WTC11 (cell line): ENCODE measurements at regions of chr4 and their contacts with region 1.

Region 1: DNA sequence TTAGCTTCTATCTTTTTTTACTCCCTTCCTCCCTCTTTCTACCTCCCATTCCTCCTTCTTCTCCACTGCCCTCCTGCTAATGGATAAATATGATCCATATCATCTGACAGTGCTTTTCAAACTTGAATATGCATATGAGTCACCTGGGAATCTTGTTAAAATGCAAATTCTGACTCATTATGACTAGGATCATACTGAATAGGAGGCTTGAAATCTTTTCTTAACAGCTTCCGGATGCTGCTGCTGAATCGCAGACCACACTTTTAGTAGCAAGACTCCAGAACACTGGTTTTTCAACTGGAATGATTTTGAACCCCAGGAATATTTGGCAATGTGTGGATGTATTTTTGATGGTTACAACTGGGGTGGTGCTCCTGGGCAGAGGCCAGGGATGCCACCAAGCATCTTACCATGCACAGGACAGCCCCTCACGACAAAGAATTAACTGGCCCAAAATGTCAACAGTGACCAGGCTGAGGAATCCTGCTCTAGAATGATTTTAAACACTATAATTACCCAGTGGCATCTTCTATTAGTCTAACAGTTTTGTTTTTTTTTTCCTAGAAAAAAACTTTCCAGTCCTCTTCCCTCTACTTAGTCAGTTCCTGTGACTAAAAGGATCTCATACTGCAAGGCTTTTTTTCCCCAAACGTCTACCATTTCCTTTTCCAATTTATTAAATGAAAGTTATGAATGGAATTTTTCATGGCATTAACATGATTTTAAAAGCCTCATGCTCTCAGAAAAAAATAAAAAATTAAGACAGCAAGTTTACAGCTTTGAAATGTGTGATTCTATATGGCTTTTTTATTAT is 10.6 kb upstream of the PYURF start:
- DNase-seq: no peak
- ATAC-seq: peak; percentile 28
- H3K4me3 Mint-ChIP-seq: peak overlapping the region; percentile 63
- H3K27ac Mint-ChIP-seq: peak overlapping the region; percentile 98
- H3K4me1 Mint-ChIP-seq: peaks cover 51% of the 10 kb centered on the region
- H3K27me3 Mint-ChIP-seq: no peaks in the 10 kb centered on the region
- CTCF ChIP-seq: no peak

Region 2: GRCh38 chr4:88477229-88477860 is 56.8 kb before region 1 on chr4:
- CTCF ChIA-PET with region 1: no interaction called
- POLR2A ChIA-PET with region 1: no interaction called
- DNase-seq: no peak
- ATAC-seq: no peak
- H3K4me3 Mint-ChIP-seq: no peak overlapping the region
- H3K27ac Mint-ChIP-seq: no peak overlapping the region
- H3K4me1 Mint-ChIP-seq: no peaks in the 10 kb centered on the region
- H3K27me3 Mint-ChIP-seq: no peaks in the 10 kb centered on the region
- CTCF ChIP-seq: no peak

Region 3: GRCh38 chr4:88523325-88524129 is 10.6 kb before region 1 on chr4 and contains the start of gene PYURF:
- CTCF ChIA-PET with region 1: interaction called, 37 read pairs
- POLR2A ChIA-PET with region 1: no interaction called
- DNase-seq: peak; percentile 95
- ATAC-seq: peak; percentile 93
- H3K4me3 Mint-ChIP-seq: peak within 1 kb of the TSS; percentile 95
- H3K27ac Mint-ChIP-seq: peak within 1 kb of the TSS; percentile 68
- H3K4me1 Mint-ChIP-seq: peaks cover 33% of the 10 kb centered on the region
- H3K27me3 Mint-ChIP-seq: no peaks in the 10 kb centered on the region
- CTCF ChIP-seq: no peak
- total RNA-seq, gene PYURF: 40.9 to 45.3 TPM (median 43.6 TPM) in 3 replicates

Region 4: GRCh38 chr4:88573995-88574394 is 39.9 kb after region 1 on chr4:
- CTCF ChIA-PET with region 1: interaction called, 13 read pairs
- POLR2A ChIA-PET with region 1: no interaction called
- DNase-seq: no peak
- ATAC-seq: peak; percentile 98
- H3K4me3 Mint-ChIP-seq: no peak overlapping the region
- H3K27ac Mint-ChIP-seq: no peak overlapping the region
- H3K4me1 Mint-ChIP-seq: peaks cover 18% of the 10 kb centered on the region
- H3K27me3 Mint-ChIP-seq: peaks cover 2% of the 10 kb centered on the region; the same call in 1 of the 2 replicates
- CTCF ChIP-seq: no peak

Region 5: GRCh38 chr4:88672987-88673386 is 138.8 kb after region 1 on chr4:
- CTCF ChIA-PET with region 1: interaction called, 10 read pairs
- POLR2A ChIA-PET with region 1: no interaction called
- DNase-seq: peak; percentile 47
- ATAC-seq: peak; percentile 91
- H3K4me3 Mint-ChIP-seq: no peak overlapping the region
- H3K27ac Mint-ChIP-seq: no peak overlapping the region
- H3K4me1 Mint-ChIP-seq: 0 out of 2 replicates have a peak, but pooled peaks cover 2% of the 10 kb centered on the region
- H3K27me3 Mint-ChIP-seq: no peaks in the 10 kb centered on the region
- CTCF ChIP-seq: peak; percentile 31; the same call in 1 of the 2 replicates